Aorta (tissue), 5 donors: ENCODE measurements at regions of chr22 and their contacts with region 1.

Region 1: GRCh38 chr22:21573750-21574494 is 6.4 kb downstream of the UBE2L3 start:
- DNase-seq: no peak
- ATAC-seq: no peak
- H3K4me3 ChIP-seq: no peak overlapping the region
- H3K27ac ChIP-seq: no peak overlapping the region
- H3K4me1 ChIP-seq: peaks cover 0 to 3% of the 10 kb centered on the region in 2 donors
- H3K27me3 ChIP-seq: no peaks in the 10 kb centered on the region

Region 2: GRCh38 chr22:21629262-21630149 is 55.6 kb after region 1 on chr22 and contains the start of gene YDJC:
- intact Hi-C with region 1: loop called in 1 of 2 experiments (anchors 2 kb)
- DNase-seq: peak; percentile 95 to 98
- ATAC-seq: peak; percentile 95
- H3K4me3 ChIP-seq: peak within 1 kb of the TSS; percentile 19 to 55
- H3K27ac ChIP-seq: peak within 1 kb of the TSS in 1 of 2 donors; percentile 14
- H3K4me1 ChIP-seq: no peaks in the 10 kb centered on the region
- H3K27me3 ChIP-seq: no peaks in the 10 kb centered on the region
- total RNA-seq, gene YDJC: 9.0 to 10.2 TPM